ENCODE measurements at regions of chr16 and their contacts with region 1.

Region 1: DNA sequence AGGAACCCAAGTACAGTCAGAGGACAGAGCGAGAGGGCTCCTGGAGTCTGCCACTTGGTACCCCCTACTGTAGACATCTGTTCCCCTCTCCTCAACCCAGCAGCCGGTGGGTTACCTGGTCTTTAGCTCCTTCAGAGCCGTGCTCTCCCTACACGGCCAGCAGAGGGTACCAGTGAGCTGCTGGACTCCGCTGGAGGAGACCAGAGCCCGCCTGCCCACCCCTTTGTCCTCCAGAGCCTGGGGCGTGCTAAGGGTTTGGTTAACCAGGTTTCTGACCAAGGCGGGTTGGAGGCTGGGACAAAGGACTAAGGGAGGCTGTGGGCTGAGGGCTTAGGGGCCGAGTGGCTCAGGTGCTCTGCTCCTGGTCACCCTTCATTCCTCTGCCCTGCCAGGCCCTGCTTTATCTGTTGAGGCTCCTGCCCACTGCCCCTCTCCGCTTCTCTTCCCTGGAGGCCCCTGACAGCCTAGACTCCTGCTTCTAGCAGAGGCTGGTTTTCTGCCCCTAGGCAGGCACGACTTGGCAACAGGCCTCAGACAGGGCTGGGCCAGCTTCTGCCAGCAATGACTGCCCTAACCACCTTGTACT is 2.7 kb upstream of the HSD11B2 start:
- DNase-seq: peak; percentile 81
- ATAC-seq: peak; percentile 74
- H3K4me3 ChIP-seq: peak overlapping the region in 1 of 3 experiments; percentile 22; a peak in 1 of 6 replicates
- H3K27ac ChIP-seq: peak overlapping the region; percentile 32
- H3K4me1 ChIP-seq: peaks cover 52% of the 10 kb centered on the region
- H3K27me3 ChIP-seq: peaks cover 4 to 32% of the 10 kb centered on the region in 2 experiments; a peak in 4 of 5 replicates
- CTCF ChIP-seq: peak; percentile 99
- EP300 ChIP-seq: no peak
- POLR2A ChIP-seq: peak in 1 of 2 experiments; percentile 26; a peak in 2 of 4 replicates
- RAD21 ChIP-seq: peak; percentile 99

Region 2: DNA sequence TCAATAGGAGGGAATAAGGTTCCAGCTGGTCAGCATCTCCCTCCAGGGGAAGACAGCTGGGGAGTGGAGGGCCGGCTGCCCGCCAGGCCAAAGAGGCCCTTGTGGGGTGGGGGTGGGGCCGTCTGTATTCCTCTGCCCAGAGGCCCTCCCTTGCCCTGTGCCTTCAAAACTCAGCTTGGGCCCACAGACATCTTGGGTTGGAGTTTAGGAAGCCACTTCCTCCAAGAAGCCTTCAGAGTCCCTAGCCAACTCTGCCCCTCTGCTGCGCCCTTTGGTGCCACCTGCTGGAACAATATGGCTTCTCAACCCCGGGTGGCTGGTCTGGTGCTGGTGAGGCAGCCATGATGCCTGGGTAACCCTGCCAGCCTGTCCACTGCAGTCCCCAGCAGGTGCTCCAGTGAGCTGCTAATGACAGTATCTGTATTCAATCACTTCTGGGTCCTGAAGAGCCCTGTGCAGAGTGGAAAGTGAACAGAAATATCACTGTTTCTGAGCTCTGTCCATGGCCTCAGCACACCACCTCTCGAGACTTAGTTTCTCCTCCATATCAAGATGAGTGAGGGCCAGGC is 19.4 kb after region 1 on chr16:
- CTCF ChIA-PET with region 1: interaction called, 56 read pairs
- POLR2A ChIA-PET with region 1: interaction called, 182 read pairs
- in situ Hi-C with region 1: no loop called
- intact Hi-C with region 1: loop called (anchors 1 kb)
- DNase-seq: peak; percentile 49
- ATAC-seq: peak; percentile 2; the same call in 1 of the 3 replicates
- H3K4me3 ChIP-seq: no peak overlapping the region
- H3K27ac ChIP-seq: peak overlapping the region; percentile 88
- H3K4me1 ChIP-seq: peaks cover 67% of the 10 kb centered on the region
- H3K27me3 ChIP-seq: no peaks in the 10 kb centered on the region
- CTCF ChIP-seq: peak; percentile 93
- EP300 ChIP-seq: no peak
- POLR2A ChIP-seq: no peak
- RAD21 ChIP-seq: peak; percentile 76

Region 3: DNA sequence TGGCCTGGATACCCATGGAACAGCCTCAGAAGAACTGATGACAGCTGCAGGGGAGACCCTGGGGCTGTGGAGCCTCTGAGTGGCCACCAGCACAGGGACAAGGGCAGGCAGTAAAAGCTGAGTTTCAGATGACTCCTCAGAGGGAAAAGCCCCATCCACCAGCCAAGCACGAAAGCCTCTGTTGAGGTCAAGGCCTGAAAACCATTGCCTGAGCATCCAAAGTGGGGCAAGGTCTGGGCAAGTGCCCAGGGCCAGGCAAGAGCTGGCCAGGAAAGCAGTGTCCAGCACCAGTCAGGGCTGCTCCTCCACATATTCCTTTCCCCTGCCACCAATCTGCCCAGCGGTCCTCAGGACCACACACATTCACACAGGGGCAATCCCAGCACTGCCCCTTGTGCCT is 36.3 kb after region 1 on chr16:
- CTCF ChIA-PET with region 1: interaction called, 98 read pairs
- POLR2A ChIA-PET with region 1: interaction called, 15 read pairs
- in situ Hi-C with region 1: loop called (anchors 5 kb)
- intact Hi-C with region 1: loop called (anchors 1 kb)
- DNase-seq: no peak
- ATAC-seq: no peak
- H3K4me3 ChIP-seq: no peak overlapping the region
- H3K27ac ChIP-seq: no peak overlapping the region
- H3K4me1 ChIP-seq: peaks cover 14% of the 10 kb centered on the region
- H3K27me3 ChIP-seq: no peaks in the 10 kb centered on the region
- CTCF ChIP-seq: no peak
- EP300 ChIP-seq: no peak
- POLR2A ChIP-seq: no peak
- RAD21 ChIP-seq: no peak

Region 4: GRCh38 chr16:67470359-67470758 is 42.1 kb after region 1 on chr16:
- CTCF ChIA-PET with region 1: interaction called, 98 read pairs
- POLR2A ChIA-PET with region 1: interaction called, 15 read pairs
- in situ Hi-C with region 1: loop called (anchors 5 kb)
- intact Hi-C with region 1: loop called (anchors 1 kb)
- DNase-seq: no peak
- ATAC-seq: no peak
- H3K4me3 ChIP-seq: no peak overlapping the region
- H3K27ac ChIP-seq: no peak overlapping the region
- H3K4me1 ChIP-seq: peaks cover 4% of the 10 kb centered on the region
- H3K27me3 ChIP-seq: no peaks in the 10 kb centered on the region
- CTCF ChIP-seq: no peak
- EP300 ChIP-seq: no peak
- POLR2A ChIP-seq: no peak
- RAD21 ChIP-seq: no peak

Region 5: GRCh38 chr16:67480833-67481560 is 52.8 kb after region 1 on chr16 and contains the start of gene ATP6V0D1:
- CTCF ChIA-PET with region 1: no interaction called
- POLR2A ChIA-PET with region 1: interaction called, 22 read pairs
- in situ Hi-C with region 1: no loop called
- intact Hi-C with region 1: loop called (anchors 5 kb)
- DNase-seq: peak; percentile 96
- ATAC-seq: peak; percentile 85
- H3K4me3 ChIP-seq: peak within 1 kb of the TSS; percentile 87 to 98 (median 88)
- H3K27ac ChIP-seq: peak within 1 kb of the TSS; percentile 91
- H3K4me1 ChIP-seq: peaks cover 58% of the 10 kb centered on the region
- H3K27me3 ChIP-seq: no peaks in the 10 kb centered on the region; a peak in 1 of 5 replicates
- CTCF ChIP-seq: peak; percentile 97
- EP300 ChIP-seq: peak in 1 of 2 experiments; percentile 32; a peak in 2 of 4 replicates
- POLR2A ChIP-seq: peak; percentile 76 to 80
- RAD21 ChIP-seq: peak; percentile 93
- total RNA-seq, gene ATP6V0D1: 49.5 and 51.1 TPM in 2 replicates

Region 6: GRCh38 chr16:67514382-67514828 is 86.2 kb after region 1 on chr16:
- CTCF ChIA-PET with region 1: no interaction called
- POLR2A ChIA-PET with region 1: no interaction called
- in situ Hi-C with region 1: no loop called
- intact Hi-C with region 1: loop called (anchors 1 kb)
- DNase-seq: peak; percentile 87
- ATAC-seq: peak; percentile 57
- H3K4me3 ChIP-seq: no peak overlapping the region
- H3K27ac ChIP-seq: no peak overlapping the region
- H3K4me1 ChIP-seq: peaks cover 19% of the 10 kb centered on the region
- H3K27me3 ChIP-seq: peaks cover 0 to 12% of the 10 kb centered on the region in 2 experiments; a peak in 1 of 5 replicates
- CTCF ChIP-seq: peak; percentile 83
- EP300 ChIP-seq: no peak
- POLR2A ChIP-seq: no peak
- RAD21 ChIP-seq: peak; percentile 66

Measured in HepG2 (cell line).